ENCODE measurements at regions of chr16 and their contacts with region 1.

Region 1: GRCh38 chr16:75471723-75472633 is 7.5 kb upstream of the TMEM170A start:
- DNase-seq: no peak

Region 2: DNA sequence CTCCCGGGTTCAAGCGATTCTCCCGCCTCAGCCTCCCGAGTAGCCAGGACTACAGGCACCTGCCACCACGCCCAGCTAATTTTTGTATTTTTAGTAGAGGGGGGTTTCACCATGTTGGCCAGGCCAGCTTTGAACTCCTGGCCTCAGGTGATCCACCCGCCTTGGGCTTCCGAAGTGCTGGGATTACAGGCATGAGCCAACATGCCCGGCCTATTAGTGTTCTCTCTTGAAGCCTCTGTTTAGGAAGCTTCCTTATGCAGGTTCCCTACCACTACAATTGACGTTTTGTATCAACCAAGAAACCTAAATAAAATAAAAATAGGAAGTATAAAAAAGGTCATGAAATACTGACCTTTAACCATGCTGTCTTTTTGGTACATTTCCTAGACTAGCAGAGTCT is 47.9 kb after region 1 on chr16:
- intact Hi-C with region 1: loop called (anchors 1 kb)
- DNase-seq: no peak

Region 3: DNA sequence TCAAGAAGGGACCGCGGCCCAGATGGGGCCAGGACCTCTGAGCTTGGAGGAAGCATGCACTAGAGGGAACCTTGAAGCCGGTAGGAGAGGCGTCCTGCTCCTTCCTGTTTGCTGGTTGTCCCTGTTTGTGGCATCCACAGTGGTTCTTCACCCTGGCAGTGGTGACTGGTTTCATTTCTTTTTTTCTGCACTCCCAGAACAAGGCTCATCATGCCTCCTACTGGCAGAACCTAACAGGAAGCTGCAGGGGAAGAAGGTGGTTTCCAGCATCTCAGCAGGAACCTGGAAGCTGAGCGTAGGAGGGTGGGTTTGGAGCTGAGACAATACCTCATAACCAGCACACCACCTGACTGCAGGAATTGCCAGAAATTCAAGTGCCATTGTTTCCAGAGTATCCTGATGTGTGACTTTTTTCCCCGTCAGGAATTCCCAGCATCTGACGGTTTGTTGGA is 78.3 kb after region 1 on chr16:
- intact Hi-C with region 1: loop called (anchors 2 kb)
- DNase-seq: no peak